AG04449 (cell line): ENCODE measurements at regions of chr7 and their contacts with region 1.

Region 1: GRCh38 chr7:81499262-81500116 is 270.4 kb downstream of the HGF start:
- DNase-seq: peak; percentile 59
- H3K4me3 ChIP-seq: no peak overlapping the region
- CTCF ChIP-seq: peak; percentile 55

Region 2: GRCh38 chr7:81232084-81232799 is 267.2 kb before region 1 on chr7:
- CTCF ChIA-PET with region 1: no interaction called
- POLR2A ChIA-PET with region 1: no interaction called
- DNase-seq: no peak
- H3K4me3 ChIP-seq: no peak overlapping the region
- CTCF ChIP-seq: no peak

Region 3: GRCh38 chr7:81410471-81411125 is 88.9 kb before region 1 on chr7:
- CTCF ChIA-PET with region 1: no interaction called
- POLR2A ChIA-PET with region 1: no interaction called
- DNase-seq: no peak
- H3K4me3 ChIP-seq: no peak overlapping the region
- CTCF ChIP-seq: no peak

Region 4: GRCh38 chr7:81482600-81483186 is 16.8 kb before region 1 on chr7:
- CTCF ChIA-PET with region 1: interaction called, 54 read pairs
- POLR2A ChIA-PET with region 1: no interaction called
- DNase-seq: no peak
- H3K4me3 ChIP-seq: no peak overlapping the region
- CTCF ChIP-seq: peak; percentile 3

Region 5: DNA sequence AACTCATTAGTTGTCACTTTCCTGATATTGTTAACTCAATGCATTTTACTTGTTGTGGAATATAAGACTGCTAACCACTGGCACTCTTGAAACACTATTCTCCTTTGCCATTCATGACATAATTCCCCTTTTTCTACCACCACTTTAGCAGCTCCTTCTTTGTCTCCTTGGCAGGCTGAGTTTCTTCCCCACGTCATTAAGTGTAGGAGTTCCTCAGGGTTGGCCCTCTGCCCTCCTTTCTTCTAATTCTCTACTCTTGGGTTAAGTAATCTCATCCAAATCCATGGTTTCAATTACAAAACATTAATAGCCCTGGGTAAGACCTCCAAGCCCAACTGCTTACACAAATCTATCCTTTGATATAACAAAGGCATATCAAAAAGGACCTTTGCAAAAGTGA is 95.3 kb after region 1 on chr7:
- CTCF ChIA-PET with region 1: no interaction called
- POLR2A ChIA-PET with region 1: no interaction called
- DNase-seq: no peak
- H3K4me3 ChIP-seq: no peak overlapping the region
- CTCF ChIP-seq: no peak

Region 6: DNA sequence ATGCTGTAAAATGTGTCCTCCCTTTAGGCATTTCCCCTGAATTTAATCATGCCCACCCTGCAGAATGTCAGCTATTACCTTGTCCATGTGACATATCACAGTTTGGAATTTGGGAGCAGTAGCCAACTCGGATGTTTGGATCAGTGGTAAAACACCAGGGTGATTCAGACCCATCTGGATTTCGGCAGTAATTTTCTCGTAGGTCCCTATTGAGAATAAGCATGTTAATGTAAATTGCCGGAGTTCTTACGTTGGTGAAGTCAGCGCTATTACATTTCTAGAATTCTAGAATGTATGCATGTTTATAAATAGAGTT is 226.3 kb after region 1 on chr7:
- CTCF ChIA-PET with region 1: interaction called, 15 read pairs
- POLR2A ChIA-PET with region 1: no interaction called
- DNase-seq: peak; percentile 86
- H3K4me3 ChIP-seq: no peak overlapping the region
- CTCF ChIP-seq: no peak

Region 7: DNA sequence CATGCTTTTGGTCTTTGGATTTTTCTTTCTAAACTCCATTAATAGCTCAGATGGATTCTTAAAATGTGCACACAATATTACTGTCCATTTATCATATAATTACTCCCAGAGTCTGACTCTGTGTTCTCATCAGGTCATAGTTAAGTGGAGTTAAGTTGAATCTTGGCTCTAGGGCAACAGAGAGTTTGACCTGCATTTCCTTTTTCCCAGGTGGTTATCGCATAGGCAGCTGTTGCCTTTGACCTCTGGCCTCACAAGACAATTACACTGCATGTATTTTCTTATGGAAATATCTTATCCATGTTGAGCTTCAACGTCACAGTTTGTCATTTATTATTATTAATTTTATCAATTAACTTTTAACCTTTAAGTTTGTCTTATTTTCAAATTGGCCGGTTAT is 507.8 kb after region 1 on chr7:
- CTCF ChIA-PET with region 1: interaction called, 28 read pairs
- POLR2A ChIA-PET with region 1: no interaction called
- DNase-seq: no peak
- H3K4me3 ChIP-seq: no peak overlapping the region
- CTCF ChIP-seq: no peak

Region 8: DNA sequence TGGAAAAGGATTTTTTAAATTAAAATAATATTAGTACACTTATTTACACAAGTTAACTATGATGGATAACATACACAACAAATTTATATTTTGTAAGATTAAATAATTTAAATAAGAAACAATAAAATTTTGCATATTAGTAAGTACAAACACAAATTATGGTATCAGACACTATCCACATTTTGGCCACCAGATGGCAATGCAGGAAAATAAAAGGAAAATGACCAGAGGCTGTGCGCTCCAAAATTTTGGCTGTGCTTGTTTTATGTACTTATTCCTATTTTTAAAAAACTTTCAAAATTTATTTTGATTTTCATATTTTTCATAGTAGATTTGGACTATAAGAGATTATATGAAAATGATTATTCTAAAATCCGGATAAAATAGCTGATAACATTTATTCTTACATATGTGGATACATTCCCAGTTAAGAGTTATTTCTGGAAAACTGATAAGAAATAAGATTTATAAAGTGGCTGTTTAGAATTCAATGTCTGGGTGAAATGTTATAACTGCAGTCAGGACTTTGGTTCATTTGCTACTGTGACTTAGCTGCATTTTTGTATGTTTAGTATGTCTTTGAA is 545.1 kb after region 1 on chr7:
- CTCF ChIA-PET with region 1: interaction called, 35 read pairs
- POLR2A ChIA-PET with region 1: no interaction called
- DNase-seq: no peak
- H3K4me3 ChIP-seq: no peak overlapping the region
- CTCF ChIP-seq: peak; percentile 44

Region 9: GRCh38 chr7:82722946-82723345 is 1223.5 kb after region 1 on chr7:
- CTCF ChIA-PET with region 1: interaction called, 38 read pairs
- POLR2A ChIA-PET with region 1: no interaction called
- DNase-seq: no peak
- H3K4me3 ChIP-seq: no peak overlapping the region
- CTCF ChIP-seq: no peak